Activated naive CD4-positive, alpha-beta T cell treated with anti-CD3 and anti-CD28 coated beads for 36 hours (primary cell): ENCODE measurements at regions of chr9 and their contacts with region 1.

Region 1: GRCh38 chr9:133023117-133023890 is 7.5 kb upstream of the GTF3C5 start:
- DNase-seq: peak; percentile 70
- H3K4me3 Mint-ChIP-seq: no peak overlapping the region
- H3K27ac Mint-ChIP-seq: no peak overlapping the region
- H3K4me1 Mint-ChIP-seq: peaks cover 15% of the 10 kb centered on the region
- H3K27me3 Mint-ChIP-seq: no peaks in the 10 kb centered on the region

Region 2: DNA sequence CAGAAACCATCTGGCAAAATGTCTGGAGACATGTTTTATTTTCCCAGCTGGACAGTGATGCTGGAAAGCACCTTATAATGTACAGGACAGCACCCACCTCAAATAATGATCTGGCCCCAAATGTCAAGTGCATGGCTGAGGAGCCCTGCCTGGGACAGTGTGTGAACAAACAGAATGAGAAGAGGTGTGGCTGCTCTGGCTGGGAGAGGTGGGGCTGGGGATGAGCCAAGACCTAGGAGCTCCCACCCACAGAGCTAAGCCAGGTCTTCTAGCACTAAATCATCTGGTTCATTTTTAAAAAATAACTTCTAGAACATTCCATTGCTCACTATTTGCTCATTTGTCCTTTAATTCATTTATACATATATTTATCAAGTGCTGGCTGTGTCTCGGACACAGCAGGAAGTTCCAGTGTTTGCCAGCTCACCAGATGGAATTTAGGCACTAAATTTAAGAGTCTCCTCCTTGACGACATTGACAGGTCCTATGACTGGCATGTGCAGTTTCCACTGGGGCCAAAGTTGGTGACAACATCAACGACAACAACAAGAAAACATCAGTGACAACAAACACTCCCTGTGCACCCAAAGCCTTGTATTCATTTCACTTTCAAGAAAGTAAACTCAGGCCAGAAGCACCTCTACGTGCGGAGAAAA is 293.9 kb before region 1 on chr9:
- CTCF ChIA-PET with region 1: no interaction called
- intact Hi-C with region 1: no loop called
- DNase-seq: no peak
- H3K4me3 Mint-ChIP-seq: no peak overlapping the region
- H3K27ac Mint-ChIP-seq: no peak overlapping the region
- H3K4me1 Mint-ChIP-seq: no peaks in the 10 kb centered on the region
- H3K27me3 Mint-ChIP-seq: peaks cover 4% of the 10 kb centered on the region

Region 3: GRCh38 chr9:133004091-133004998 is 19.0 kb before region 1 on chr9:
- CTCF ChIA-PET with region 1: interaction called, 13 read pairs
- intact Hi-C with region 1: no loop called
- DNase-seq: no peak
- H3K4me3 Mint-ChIP-seq: no peak overlapping the region
- H3K27ac Mint-ChIP-seq: no peak overlapping the region
- H3K4me1 Mint-ChIP-seq: no peaks in the 10 kb centered on the region
- H3K27me3 Mint-ChIP-seq: peaks cover 38% of the 10 kb centered on the region